ENCODE measurements at regions of chr1 and their contacts with region 1.

Region 1: DNA sequence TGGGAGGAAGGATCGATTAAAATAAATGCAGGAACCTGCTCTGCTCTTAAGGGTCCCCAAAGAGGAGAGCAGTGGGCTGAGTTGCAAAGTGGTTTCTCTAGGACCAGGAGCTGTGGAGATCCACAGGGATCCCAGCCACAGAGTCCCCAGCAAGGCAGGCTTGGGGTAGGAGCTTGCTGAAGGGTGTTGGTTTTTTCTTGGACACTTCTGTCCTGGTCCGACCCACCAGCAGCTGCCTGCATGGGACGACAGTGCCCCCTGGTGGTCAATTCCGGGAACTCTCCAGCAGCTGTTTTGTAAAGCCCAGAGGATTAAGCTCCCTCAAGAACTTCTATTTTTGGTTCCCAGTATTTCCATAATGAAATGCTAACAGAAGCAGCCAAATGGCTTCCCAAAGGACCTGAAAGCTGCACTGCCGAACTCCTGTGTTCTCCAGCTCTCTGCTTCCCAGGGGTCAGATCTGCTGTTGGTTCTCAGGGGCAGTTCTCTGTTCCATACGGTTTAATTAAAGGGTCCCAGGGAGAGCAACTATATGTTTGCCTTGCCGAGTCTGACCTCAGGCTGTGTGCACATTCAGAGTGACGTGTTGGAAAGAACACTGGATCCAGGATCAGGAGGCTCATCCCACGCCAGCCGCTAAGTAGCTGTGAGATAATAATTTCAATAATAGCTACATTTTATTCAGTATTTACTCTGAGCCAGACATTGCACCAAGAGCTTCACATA is 23.2 kb downstream of the NENF start:
- DNase-seq: peak; percentile 88 to 98 (median 94)
- H3K4me3 ChIP-seq: peak overlapping the region in 17 of 59 donors; percentile 3 to 42 (median 28)
- H3K27ac ChIP-seq: peak overlapping the region in 58 of 59 donors; percentile 31 to 99 (median 91)
- H3K27me3 ChIP-seq: no peaks in the 10 kb centered on the region
- CTCF ChIP-seq: peak; percentile 98 to 100 (median 99)

Region 2: GRCh38 chr1:211680752-211681327 is 775.1 kb before region 1 on chr1:
- intact Hi-C with region 1: loop called (anchors 10 kb)
- DNase-seq: peak; percentile 57 to 85 (median 80)
- H3K4me3 ChIP-seq: peak overlapping the region in 4 of 59 donors; percentile 2 to 20 (median 15)
- H3K27ac ChIP-seq: peak overlapping the region in 38 of 59 donors; percentile 1 to 85 (median 48)
- H3K27me3 ChIP-seq: no peaks in the 10 kb centered on the region
- CTCF ChIP-seq: peak; percentile 67 to 95 (median 85)

Region 3: DNA sequence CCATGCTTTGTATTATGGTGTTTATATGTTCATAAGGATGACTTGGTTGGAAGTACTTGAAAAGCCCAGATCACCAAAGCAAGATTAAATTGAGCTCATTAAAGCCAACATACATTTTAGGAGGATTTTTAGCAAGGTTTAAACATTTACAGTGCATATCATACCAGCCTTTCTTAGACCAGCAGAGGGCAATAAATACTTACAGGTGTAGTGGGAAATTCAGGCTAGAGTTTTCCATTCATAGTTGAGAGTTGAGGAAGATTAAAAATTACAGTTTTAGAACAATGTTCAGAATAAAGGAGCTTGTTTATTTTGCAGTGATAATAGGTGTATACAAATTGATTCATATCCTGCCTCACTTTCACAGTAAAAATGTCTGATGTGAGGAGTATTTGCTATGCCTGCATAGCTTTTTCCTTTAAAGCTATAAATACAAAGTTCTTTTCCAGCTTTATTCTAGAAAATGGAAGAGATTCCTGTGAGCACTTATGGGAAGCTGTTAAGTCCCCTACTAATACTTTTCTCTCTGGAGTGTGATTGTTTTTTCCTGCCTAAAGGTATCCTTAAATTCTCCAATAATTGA is 385.2 kb before region 1 on chr1:
- intact Hi-C with region 1: loop called (anchors 1 to 2 kb)
- DNase-seq: no peak
- H3K4me3 ChIP-seq: no peak overlapping the region
- H3K27ac ChIP-seq: no peak overlapping the region
- H3K27me3 ChIP-seq: no peaks in the 10 kb centered on the region
- CTCF ChIP-seq: peak; percentile 67 to 96 (median 82)

Region 4: DNA sequence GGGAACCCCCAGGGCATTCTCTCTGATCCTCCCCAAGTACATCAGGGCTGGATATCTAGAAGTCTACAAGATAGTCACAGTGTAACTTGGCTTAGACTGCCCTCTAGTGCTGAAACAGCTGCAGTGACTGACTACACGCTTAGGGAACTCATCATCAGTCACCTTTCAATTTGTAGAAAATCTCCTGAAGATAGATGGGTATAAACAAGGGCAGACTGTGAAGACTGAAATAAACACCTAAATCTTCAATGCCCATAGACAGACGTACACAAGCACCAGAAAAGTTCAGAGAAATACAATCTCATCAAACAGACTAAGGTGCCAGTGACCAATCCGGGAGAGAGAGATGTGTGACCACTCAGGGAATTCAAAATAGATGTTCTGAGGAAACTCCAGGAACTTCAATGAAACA is 87.9 kb before region 1 on chr1:
- intact Hi-C with region 1: loop called (anchors 5 kb)
- DNase-seq: peak in 2 of 10 donors; percentile 43 to 61
- H3K4me3 ChIP-seq: no peak overlapping the region
- H3K27ac ChIP-seq: peak overlapping the region in 5 of 59 donors; percentile 0 to 45 (median 32)
- H3K27me3 ChIP-seq: no peaks in the 10 kb centered on the region
- CTCF ChIP-seq: peak; percentile 25 to 83 (median 68)

Region 5: DNA sequence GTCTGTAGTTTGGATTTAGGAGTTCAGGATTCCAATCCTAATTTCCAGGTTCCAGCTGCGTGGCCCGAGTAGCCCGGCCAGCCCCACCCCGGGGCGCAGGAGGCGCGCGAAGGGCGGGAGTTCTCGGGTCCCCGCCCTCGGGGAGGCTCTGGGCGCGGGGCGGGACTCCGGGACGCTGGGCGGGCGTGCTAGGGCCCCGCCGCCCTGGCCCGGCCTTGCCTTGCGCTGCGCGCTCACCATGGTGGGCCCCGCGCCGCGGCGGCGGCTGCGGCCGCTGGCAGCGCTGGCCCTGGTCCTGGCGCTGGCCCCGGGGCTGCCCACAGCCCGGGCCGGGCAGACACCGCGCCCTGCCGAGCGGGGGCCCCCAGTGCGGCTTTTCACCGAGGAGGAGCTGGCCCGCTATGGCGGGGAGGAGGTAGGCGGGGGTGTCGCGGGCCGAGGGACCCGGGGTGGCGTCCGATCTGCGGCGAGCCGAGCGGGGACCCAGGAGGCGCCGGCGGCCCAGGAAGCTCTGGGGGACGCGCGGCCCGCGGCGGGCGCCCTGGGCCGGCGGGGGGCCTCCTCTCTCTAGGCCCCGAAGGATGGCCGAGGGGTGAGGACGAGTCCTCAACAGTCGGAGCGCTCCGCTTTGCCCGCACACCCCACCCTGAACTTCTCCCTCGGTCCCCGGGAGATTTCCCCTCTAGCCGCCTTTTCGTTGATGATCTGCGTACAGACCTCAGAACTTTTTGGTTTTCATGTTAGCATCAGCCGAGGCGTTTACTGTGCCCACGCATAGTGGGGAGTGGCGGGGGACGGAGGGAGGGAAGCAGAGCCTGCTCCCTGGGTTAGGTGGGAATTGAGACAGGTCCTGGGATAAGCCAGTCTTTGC is 23.0 kb before region 1 on chr1 and contains the start of gene NENF:
- intact Hi-C with region 1: loop called in 1 of 2 experiments (anchors 2 kb)
- DNase-seq: peak; percentile 58 to 90 (median 78)
- H3K4me3 ChIP-seq: peak within 1 kb of the TSS; percentile 49 to 93 (median 79)
- H3K27ac ChIP-seq: peak within 1 kb of the TSS; percentile 40 to 97 (median 90)
- H3K27me3 ChIP-seq: no peaks in the 10 kb centered on the region
- CTCF ChIP-seq: peak in 8 of 56 donors; percentile 3 to 27 (median 19)
- total RNA-seq, gene NENF: 43.3 to 144 (median 67.5) TPM

Measured in dorsolateral prefrontal cortex (tissue), 120 donors.